Sigmoid colon (tissue), 7 donors: ENCODE measurements at regions of chrX and their contacts with region 1.

Region 1: GRCh38 chrX:49269010-49269767 is 404 bp upstream of the PPP1R3F start:
- DNase-seq: peak; percentile 99
- H3K4me3 ChIP-seq: peak overlapping the region; percentile 40 to 77 (median 75)
- H3K27ac ChIP-seq: peak overlapping the region; percentile 87 to 93 (median 90)
- H3K4me1 ChIP-seq: peaks cover 0 to 33% (median 22%) of the 10 kb centered on the region in 4 donors
- H3K27me3 ChIP-seq: no peaks in the 10 kb centered on the region
- CTCF ChIP-seq: no peak
- EP300 ChIP-seq: no peak
- POLR2A ChIP-seq: peak; percentile 45 to 67

Region 2: GRCh38 chrX:49199906-49200771 is 69.0 kb before region 1 on chrX and contains the start of gene SYP:
- intact Hi-C with region 1: loop called (anchors 2 kb)
- DNase-seq: peak; percentile 96
- H3K4me3 ChIP-seq: peak within 1 kb of the TSS in 3 of 4 donors; percentile 27 to 43 (median 37)
- H3K27ac ChIP-seq: peak within 1 kb of the TSS; percentile 55 to 72 (median 65)
- H3K4me1 ChIP-seq: peaks cover 0 to 8% (median 5%) of the 10 kb centered on the region in 4 donors
- H3K27me3 ChIP-seq: no peaks in the 10 kb centered on the region
- CTCF ChIP-seq: no peak
- EP300 ChIP-seq: no peak
- POLR2A ChIP-seq: peak; percentile 43 to 69
- total RNA-seq, gene SYP: 4.1 to 14.6 (median 10.9) TPM

Region 3: DNA sequence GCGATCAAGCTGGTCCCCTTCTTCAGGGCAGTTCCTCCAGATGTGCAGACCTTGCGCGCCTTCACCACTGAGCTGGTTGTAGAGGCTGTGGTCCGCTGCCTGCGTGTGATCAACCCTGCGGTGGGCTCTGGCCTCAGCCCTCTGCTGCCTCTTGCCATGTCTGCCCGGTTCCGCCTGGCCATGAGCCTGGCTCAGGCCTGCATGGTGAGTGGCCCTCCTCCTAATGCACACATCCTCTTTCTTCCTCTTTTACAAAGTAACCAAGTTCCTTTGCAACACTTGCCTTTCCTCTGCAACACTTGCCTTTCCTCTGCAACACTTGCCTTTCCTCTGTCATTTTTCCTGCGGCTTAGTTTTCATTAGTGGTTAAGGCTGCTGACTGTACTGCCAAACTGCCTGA is 32.1 kb before region 1 on chrX:
- intact Hi-C with region 1: loop called (anchors 2 kb)
- DNase-seq: no peak
- H3K4me3 ChIP-seq: no peak overlapping the region
- H3K27ac ChIP-seq: no peak overlapping the region
- H3K4me1 ChIP-seq: peaks cover 0 to 11% (median 2%) of the 10 kb centered on the region in 4 donors
- H3K27me3 ChIP-seq: peaks cover 0 to 6% (median 0%) of the 10 kb centered on the region in 3 donors
- CTCF ChIP-seq: no peak
- EP300 ChIP-seq: no peak
- POLR2A ChIP-seq: no peak